Gastrocnemius medialis (tissue), 4 donors: ENCODE measurements at regions of chr17 and their contacts with region 1.

Region 1: DNA sequence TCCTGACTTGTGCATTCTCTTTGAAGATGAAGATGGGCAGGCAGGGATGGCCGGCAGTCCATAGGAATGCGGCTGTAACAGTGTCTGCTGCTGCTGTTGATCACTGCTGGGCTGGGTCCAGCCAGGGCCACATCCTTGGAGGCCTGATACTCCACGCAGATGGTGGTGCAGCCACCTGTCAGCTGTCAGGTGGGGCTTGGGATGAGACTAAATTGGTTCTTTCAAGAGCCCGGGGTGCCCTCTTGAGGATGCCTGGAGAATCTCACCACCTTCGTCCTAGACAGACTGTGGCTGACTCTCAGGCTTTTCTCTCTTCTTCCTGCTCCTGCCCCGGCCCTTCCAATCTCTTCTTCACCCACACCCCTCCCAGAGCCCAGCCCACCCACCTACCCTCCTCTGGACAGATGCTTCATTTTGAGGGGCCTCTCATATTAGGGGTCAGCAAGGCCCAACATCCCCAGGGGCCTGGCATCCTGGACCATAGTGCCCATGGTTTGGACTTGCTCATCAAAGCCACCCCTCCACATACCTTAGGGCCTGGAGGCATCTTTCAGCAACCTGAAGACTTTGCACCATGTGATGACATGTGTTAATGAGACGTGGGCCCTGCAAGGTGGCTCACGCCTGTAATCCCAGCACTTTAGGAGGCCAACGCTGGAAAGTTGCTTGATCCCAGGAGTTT is 19.1 kb downstream of the OSBPL7 start:
- DNase-seq: peak in 1 of 2 donors; percentile 40
- ATAC-seq: peak; percentile 50 to 61
- H3K4me3 ChIP-seq: no peak overlapping the region
- H3K27ac ChIP-seq: no peak overlapping the region
- H3K4me1 ChIP-seq: peaks cover 0 to 19% of the 10 kb centered on the region in 2 donors
- H3K27me3 ChIP-seq: no peaks in the 10 kb centered on the region
- CTCF ChIP-seq: peak; percentile 28 to 56 (median 45)
- POLR2A ChIP-seq: no peak

Region 2: DNA sequence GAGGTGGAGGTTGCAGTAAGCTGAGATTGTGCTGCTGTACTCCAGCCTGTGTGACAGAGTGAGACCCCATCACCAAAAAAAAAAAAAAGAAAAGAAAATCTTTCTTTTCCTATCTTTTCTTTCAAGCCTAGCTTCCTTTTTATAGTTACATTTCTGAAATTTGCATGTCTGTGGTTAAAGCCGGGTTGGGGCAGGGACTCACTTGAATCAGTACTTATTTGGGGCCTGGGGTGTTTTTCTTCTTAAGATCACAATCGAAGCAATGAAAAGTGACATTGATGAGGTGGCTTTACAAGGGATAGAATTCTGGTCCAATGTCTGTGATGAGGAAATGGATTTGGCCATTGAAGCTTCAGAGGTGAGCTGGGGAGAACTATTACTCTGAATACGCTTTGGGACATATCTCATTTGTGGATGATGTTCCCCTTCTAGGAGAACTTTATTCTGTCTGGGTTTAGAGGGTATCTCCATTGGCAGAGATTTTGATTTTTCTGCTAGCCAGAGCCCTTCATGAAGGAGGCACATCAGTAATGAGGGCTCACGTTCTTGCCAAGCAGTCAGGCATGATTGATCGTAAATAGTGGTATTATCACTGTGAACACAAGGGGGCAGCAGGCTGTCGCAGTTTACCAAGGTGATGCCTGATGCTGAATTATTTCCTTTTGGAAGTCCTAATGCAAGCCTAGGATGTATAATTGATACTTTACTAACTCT is 138.4 kb before region 1 on chr17:
- in situ Hi-C with region 1: loop called in 1 of 4 experiments (anchors 25 kb)
- intact Hi-C with region 1: loop called (anchors 5 kb)
- DNase-seq: no peak
- ATAC-seq: peak; percentile 29 to 63
- H3K4me3 ChIP-seq: no peak overlapping the region
- H3K27ac ChIP-seq: no peak overlapping the region
- H3K4me1 ChIP-seq: no peaks in the 10 kb centered on the region
- H3K27me3 ChIP-seq: no peaks in the 10 kb centered on the region
- CTCF ChIP-seq: peak; percentile 51 to 69 (median 56)
- POLR2A ChIP-seq: no peak

Region 3: GRCh38 chr17:47698749-47699535 is 103.5 kb before region 1 on chr17:
- in situ Hi-C with region 1: loop called in 1 of 4 experiments (anchors 10 kb)
- intact Hi-C with region 1: loop called (anchors 10 kb)
- DNase-seq: no peak
- ATAC-seq: no peak
- H3K4me3 ChIP-seq: no peak overlapping the region
- H3K27ac ChIP-seq: no peak overlapping the region
- H3K4me1 ChIP-seq: peaks cover 4 to 7% of the 10 kb centered on the region in 2 donors
- H3K27me3 ChIP-seq: no peaks in the 10 kb centered on the region
- CTCF ChIP-seq: peak; percentile 57 to 97 (median 84)
- POLR2A ChIP-seq: no peak

Region 4: GRCh38 chr17:47742319-47743181 is 59.9 kb before region 1 on chr17:
- in situ Hi-C with region 1: no loop called
- intact Hi-C with region 1: no loop called
- DNase-seq: no peak
- ATAC-seq: no peak
- H3K4me3 ChIP-seq: no peak overlapping the region
- H3K27ac ChIP-seq: no peak overlapping the region
- H3K4me1 ChIP-seq: no peaks in the 10 kb centered on the region
- H3K27me3 ChIP-seq: peaks cover 31 to 35% (median 33%) of the 10 kb centered on the region in 3 donors
- CTCF ChIP-seq: peak in 2 of 5 experiments; percentile 6 to 20
- POLR2A ChIP-seq: no peak